OCI-LY7 (cell line): ENCODE measurements at regions of chr3 and their contacts with region 1.

Region 1: DNA sequence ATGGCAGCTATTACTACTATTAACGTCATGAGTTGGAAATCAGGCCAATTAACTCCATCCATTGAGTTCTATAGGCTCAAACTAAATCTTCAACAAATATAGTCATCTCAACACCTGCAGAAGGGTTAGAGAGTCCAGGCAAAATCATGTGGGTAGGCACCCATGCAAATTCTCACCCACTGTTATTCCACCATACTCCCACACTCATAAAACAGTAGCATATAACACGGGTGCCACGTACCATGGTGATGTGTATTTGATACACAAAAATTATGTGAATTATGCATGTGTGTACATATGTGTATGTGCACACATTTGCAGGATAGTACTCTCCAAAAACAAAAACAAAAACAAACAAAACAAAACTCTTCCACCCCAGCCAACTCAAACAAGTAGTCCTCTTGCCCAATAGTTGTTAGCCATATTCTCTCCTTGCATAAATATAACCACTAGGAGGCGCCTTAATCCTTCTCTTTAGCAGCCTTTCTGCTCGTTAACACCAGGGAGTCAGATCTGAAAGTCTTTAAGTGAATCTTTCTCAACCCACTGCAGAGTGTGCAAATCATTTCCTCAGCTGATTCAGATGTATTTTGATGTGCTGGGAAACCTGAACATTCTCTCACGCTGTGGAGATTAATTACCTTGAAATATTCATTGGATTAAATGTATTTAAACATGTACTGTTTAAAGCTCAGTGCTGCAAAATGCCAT is 38.0 kb upstream of the COPB2 start:
- DNase-seq: peak; percentile 70
- H3K4me3 ChIP-seq: no peak overlapping the region
- H3K27ac ChIP-seq: no peak overlapping the region
- H3K4me1 ChIP-seq: no peaks in the 10 kb centered on the region
- CTCF ChIP-seq: peak; percentile 90

Region 2: GRCh38 chr3:139457066-139457465 is 29.6 kb after region 1 on chr3:
- CTCF ChIA-PET with region 1: no interaction called
- POLR2A ChIA-PET with region 1: no interaction called
- intact Hi-C with region 1: no loop called
- DNase-seq: no peak
- H3K4me3 ChIP-seq: no peak overlapping the region
- H3K27ac ChIP-seq: no peak overlapping the region
- H3K4me1 ChIP-seq: no peaks in the 10 kb centered on the region
- CTCF ChIP-seq: no peak

Region 3: DNA sequence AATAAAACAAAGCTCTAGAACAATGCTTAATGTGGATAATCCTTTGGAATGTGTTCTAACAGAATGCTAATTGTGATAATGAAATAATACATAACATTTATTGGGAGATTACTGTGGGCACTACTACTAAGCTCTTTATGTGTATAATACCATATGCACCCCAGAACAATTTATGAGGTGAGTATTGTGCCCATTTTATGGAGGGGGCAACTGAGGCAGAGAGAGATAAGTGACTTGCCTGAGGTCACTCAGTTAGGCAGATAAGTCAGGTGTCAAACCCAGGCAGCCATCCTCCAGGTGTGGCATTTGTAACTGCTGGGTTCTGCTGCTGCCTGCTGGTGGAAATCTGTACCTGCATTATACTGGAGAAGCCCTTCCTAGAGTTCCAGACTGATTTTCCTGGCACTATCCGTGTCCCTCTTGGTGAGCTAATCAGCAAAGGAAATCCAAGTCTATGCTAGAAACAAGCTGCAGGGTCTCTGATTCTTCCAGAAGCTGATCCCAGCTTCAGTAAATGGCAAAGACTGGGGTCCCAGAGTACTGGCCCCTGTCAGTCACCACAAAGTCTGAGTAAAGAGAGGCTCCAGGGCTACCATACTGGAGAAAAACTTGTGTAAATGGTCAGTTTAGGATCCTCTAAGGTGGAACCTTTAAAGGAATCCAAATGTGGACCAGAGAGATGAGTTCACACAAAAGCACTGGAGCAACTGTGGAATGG is 134.7 kb after region 1 on chr3:
- CTCF ChIA-PET with region 1: no interaction called
- POLR2A ChIA-PET with region 1: no interaction called
- intact Hi-C with region 1: loop called (anchors 1 kb)
- DNase-seq: peak; percentile 21
- H3K4me3 ChIP-seq: no peak overlapping the region
- H3K27ac ChIP-seq: no peak overlapping the region
- H3K4me1 ChIP-seq: no peaks in the 10 kb centered on the region
- CTCF ChIP-seq: peak; percentile 62

Region 4: GRCh38 chr3:139629033-139629432 is 201.6 kb after region 1 on chr3:
- CTCF ChIA-PET with region 1: no interaction called
- POLR2A ChIA-PET with region 1: no interaction called
- intact Hi-C with region 1: loop called (anchors 5 kb)
- DNase-seq: peak; percentile 32
- H3K4me3 ChIP-seq: no peak overlapping the region
- H3K27ac ChIP-seq: no peak overlapping the region
- H3K4me1 ChIP-seq: no peaks in the 10 kb centered on the region
- CTCF ChIP-seq: peak; percentile 71